Psoas muscle (tissue), 8 donors: ENCODE measurements at regions of chr3 and their contacts with region 1.

Region 1: DNA sequence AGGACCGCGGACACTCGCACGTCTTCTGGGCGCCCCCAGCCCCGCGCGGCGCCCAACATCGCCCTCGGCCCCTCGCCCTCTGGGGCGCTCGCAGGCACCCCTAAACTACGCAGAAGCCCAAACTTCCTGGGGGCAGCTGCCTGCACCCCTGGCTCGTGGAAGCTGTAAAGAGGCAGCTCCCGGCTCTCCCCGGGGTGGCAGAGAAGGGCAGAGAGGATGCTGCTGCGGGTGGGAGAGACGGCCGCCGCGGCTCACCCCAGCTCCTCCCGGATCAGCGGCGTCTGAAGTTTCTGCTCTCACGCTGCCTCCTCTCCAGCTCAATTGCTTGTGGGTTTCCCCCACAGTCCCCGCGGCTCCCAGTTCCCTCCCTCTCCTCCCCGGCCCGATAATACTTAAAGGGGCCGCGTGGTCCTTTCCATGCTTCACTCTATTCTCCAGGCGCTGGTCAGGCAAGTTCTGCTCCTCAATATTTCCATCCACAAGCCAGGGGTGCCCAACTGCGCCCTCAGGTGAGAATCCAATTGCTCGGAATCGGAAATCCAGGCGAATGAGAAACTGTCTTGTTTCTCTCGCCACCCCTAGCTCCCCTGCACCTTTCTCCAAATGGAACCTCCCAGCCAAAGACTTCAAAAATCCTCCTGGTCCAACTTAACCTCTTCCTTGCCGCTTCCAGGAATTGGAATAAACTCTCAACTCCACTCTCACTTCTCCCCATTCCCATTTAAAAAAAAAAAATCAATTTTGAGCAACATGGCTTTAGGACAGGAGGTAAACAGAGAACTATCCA is 748.5 kb downstream of the ROBO1 start:
- DNase-seq: peak; percentile 75 to 87
- ATAC-seq: peak; percentile 81 to 84 (median 84)
- H3K4me3 ChIP-seq: peak overlapping the region; percentile 90
- H3K27ac ChIP-seq: peak overlapping the region; percentile 83
- H3K4me1 ChIP-seq: peaks cover 6% of the 10 kb centered on the region
- H3K27me3 ChIP-seq: peaks cover 0 to 3% (median 0%) of the 10 kb centered on the region in 3 donors
- CTCF ChIP-seq: no peak

Region 2: DNA sequence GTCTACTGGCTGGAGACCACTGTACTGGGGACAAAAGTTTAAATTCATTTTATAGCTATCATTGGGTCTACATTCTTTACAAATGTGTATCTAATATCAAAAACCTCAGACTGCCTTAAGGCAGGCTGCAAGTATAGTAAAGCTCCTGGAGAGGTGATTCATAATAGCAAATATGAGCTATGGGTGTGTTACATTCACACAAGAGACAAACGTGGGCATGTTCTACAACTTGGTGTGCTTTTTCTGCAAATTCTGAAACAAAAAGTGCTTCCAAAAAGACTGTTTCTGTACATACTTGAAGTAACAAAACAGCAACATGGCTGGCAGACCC is 352.9 kb before region 1 on chr3:
- intact Hi-C with region 1: loop called in 1 of 2 experiments (anchors 5 kb)
- DNase-seq: no peak
- ATAC-seq: no peak
- H3K4me3 ChIP-seq: no peak overlapping the region
- H3K27ac ChIP-seq: no peak overlapping the region
- H3K4me1 ChIP-seq: no peaks in the 10 kb centered on the region
- H3K27me3 ChIP-seq: no peaks in the 10 kb centered on the region
- CTCF ChIP-seq: no peak

Region 3: DNA sequence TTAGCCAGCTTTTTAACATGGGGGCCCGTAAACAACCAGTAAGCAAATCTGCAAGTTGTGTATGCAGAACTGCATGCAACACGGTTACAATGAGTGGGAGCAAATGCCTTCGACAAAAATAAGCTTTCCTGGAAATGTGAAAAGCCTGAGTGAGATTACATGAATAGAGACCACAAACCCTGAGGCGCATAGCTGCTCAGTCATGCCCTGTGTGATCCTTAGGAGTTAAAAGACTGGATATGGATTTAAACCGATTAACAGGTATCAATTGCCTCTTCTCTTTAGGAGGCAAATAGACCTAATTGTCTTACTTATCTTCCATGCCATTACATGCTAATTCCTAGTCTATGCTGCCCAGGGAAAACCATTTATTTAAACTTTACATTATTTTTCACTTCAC is 61.9 kb before region 1 on chr3:
- intact Hi-C with region 1: no loop called
- DNase-seq: no peak
- ATAC-seq: no peak
- H3K4me3 ChIP-seq: no peak overlapping the region
- H3K27ac ChIP-seq: no peak overlapping the region
- H3K4me1 ChIP-seq: peaks cover 4% of the 10 kb centered on the region
- H3K27me3 ChIP-seq: no peaks in the 10 kb centered on the region
- CTCF ChIP-seq: no peak